GM12878 (cell line): ENCODE measurements at regions of chr1 and their contacts with region 1.

Region 1: GRCh38 chr1:181142096-181142958 is 53.8 kb downstream of the IER5 start:
- DNase-seq: no peak
- ATAC-seq: peak; percentile 92
- H3K4me3 ChIP-seq: no peak overlapping the region
- H3K27ac ChIP-seq: no peak overlapping the region
- H3K4me1 ChIP-seq: peaks cover 37% of the 10 kb centered on the region
- H3K27me3 ChIP-seq: no peaks in the 10 kb centered on the region
- CTCF ChIP-seq: peak; percentile 94 to 98 (median 98); a peak in 5 of 6 replicates
- EP300 ChIP-seq: no peak
- POLR2A ChIP-seq: no peak
- RAD21 ChIP-seq: peak; percentile 99

Region 2: DNA sequence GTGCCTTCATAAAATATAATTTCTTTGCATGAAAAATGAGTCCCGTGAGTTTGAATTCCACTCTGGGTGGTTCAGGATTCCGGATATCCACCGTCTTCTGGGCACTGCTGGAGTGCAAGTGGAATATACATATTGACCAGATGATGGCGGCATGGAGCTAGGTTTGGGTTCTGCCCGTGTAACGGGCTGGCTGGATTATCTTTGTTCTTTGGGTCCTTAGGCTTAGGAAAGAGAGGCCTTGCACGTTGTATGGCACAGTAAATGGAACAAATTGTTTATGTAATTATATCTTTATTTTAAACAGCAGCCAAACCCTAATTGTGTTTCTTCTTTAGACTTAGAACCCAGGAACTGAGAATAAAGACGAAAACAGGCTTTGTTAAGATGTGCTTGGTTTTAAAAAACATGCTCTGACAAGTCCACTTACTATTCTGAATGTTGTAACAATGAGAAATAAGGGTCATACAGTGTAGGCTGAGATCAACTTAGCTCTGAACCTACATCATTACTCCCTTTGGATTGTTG is 626.4 kb before region 1 on chr1:
- CTCF ChIA-PET with region 1: interaction called, 8 read pairs
- POLR2A ChIA-PET with region 1: no interaction called
- RAD21 ChIA-PET with region 1: interaction called, 12 read pairs
- SMC1A ChIA-PET with region 1: interaction called, 9 read pairs
- in situ Hi-C with region 1: no loop called
- intact Hi-C with region 1: no loop called
- DNase-seq: peak; percentile 49
- ATAC-seq: peak; percentile 99
- H3K4me3 ChIP-seq: no peak overlapping the region
- H3K27ac ChIP-seq: peak overlapping the region; percentile 40; the same call in 1 of the 2 replicates
- H3K4me1 ChIP-seq: peaks cover 3% of the 10 kb centered on the region; the same call in 1 of the 2 replicates
- H3K27me3 ChIP-seq: no peaks in the 10 kb centered on the region
- CTCF ChIP-seq: peak; percentile 72 to 88 (median 76)
- EP300 ChIP-seq: no peak
- POLR2A ChIP-seq: no peak
- RAD21 ChIP-seq: peak; percentile 92

Region 3: DNA sequence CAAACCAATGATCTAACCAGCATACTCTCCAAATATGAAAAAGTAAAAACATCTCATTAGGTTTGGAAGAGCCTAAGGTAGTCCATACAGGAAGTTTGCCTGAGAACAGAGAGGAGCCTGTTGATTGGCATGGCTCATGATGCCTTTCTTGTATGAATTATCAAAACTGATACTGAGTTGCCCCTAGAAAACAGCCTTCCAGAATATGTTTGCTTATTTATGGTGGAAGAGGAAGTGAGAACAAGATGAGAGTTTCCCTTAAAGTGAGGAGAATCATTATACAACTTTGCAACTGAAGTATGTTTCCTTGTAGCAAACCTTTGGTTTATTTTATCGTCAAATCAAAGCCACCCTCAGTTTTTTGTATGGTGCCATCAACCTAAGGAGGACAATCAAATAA is 253.5 kb before region 1 on chr1:
- CTCF ChIA-PET with region 1: interaction called, 151 read pairs
- POLR2A ChIA-PET with region 1: interaction called, 4 read pairs
- RAD21 ChIA-PET with region 1: interaction called, 151 read pairs
- SMC1A ChIA-PET with region 1: interaction called, 48 read pairs
- in situ Hi-C with region 1: loop called (anchors 5 kb)
- intact Hi-C with region 1: no loop called
- DNase-seq: peak; percentile 50
- ATAC-seq: peak; percentile 96
- H3K4me3 ChIP-seq: no peak overlapping the region
- H3K27ac ChIP-seq: peak overlapping the region; percentile 10; the same call in 1 of the 2 replicates
- H3K4me1 ChIP-seq: peaks cover 8% of the 10 kb centered on the region
- H3K27me3 ChIP-seq: no peaks in the 10 kb centered on the region
- CTCF ChIP-seq: no peak
- EP300 ChIP-seq: peak in 1 of 2 experiments; percentile 62; a peak in 1 of 4 replicates
- POLR2A ChIP-seq: no peak
- RAD21 ChIP-seq: no peak

Region 4: DNA sequence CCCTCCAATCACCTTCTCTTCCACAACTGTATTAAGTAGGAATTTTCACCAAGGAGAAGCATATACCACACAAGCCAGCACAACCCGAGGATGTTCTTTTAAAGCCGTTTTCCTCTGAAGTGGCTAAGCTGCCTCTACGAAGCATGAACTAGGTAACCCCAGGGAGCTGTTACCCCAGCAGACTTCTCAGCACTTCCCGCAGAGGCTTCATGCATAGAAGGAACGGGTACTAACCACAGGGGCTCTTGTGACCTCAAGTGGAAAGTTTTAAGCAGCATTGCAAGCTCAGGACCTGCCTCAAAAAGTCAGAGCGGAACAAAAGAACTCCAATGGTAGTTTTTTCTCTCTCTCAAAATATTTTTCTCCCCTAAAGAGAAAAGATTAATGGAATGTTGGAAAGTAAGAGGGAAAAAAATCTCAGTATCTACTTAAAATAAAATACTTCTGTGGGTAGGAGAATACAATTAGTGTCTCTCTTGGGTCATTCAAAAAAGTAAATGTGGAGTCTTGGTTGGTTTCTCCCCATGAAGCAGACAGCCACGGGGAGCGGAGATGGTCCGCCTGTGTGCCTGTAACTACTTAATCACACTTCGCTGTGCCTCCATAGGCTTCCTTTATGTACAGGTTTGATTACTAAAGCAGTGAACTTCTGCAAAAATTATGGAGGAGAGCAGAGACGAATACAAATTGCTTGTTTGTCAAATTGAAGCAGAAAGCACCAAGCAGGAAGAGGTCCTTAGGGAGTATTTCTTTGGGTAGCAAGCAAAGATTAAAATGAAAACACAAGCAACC is 160.5 kb before region 1 on chr1:
- CTCF ChIA-PET with region 1: interaction called, 11 read pairs
- POLR2A ChIA-PET with region 1: no interaction called
- RAD21 ChIA-PET with region 1: interaction called, 3 read pairs
- SMC1A ChIA-PET with region 1: interaction called, 13 read pairs
- in situ Hi-C with region 1: no loop called
- intact Hi-C with region 1: no loop called
- DNase-seq: peak; percentile 47
- ATAC-seq: peak; percentile 91
- H3K4me3 ChIP-seq: peak overlapping the region; percentile 19; the same call in 1 of the 2 replicates
- H3K27ac ChIP-seq: peak overlapping the region; percentile 65
- H3K4me1 ChIP-seq: peaks cover 8% of the 10 kb centered on the region; the same call in 1 of the 2 replicates
- H3K27me3 ChIP-seq: no peaks in the 10 kb centered on the region
- CTCF ChIP-seq: peak in 1 of 3 experiments; percentile 22; a peak in 1 of 6 replicates
- EP300 ChIP-seq: no peak
- POLR2A ChIP-seq: no peak
- RAD21 ChIP-seq: peak; percentile 32; the same call in 1 of the 2 replicates

Region 5: DNA sequence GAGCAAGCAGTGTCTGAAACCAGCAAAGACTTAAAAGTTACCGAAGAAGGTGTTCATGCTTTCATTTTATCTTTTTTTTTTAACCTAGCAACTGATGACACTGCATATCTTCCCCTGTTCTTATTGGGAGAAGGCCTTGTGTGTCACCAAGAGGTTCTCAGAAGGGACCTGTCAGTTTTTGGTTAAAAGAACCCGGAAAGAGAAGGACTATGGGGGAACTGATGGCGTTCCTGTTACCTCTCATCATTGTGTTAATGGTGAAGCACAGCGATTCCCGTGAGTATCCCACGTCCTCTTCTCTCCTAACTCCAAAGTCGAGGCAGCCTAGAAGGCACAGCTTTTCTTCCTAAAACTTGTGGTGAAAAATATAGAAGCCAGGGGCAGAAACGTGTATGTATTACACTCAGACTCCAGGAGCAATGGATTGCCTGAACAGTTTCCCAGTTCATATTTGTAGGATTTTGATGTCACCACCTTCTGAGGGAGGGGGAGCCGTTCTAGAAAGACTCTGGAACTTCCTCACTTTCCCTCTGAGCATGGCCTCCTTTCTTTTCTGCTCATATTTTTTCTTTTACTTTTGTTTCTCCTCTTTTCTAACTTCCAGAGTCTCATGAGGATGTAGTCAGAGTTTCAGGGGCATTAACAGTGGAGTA is 108.4 kb before region 1 on chr1 and contains the start of gene MR1:
- CTCF ChIA-PET with region 1: interaction called, 321 read pairs
- POLR2A ChIA-PET with region 1: interaction called, 13 read pairs
- RAD21 ChIA-PET with region 1: interaction called, 189 read pairs
- SMC1A ChIA-PET with region 1: interaction called, 276 read pairs
- in situ Hi-C with region 1: loop called (anchors 5 kb)
- intact Hi-C with region 1: loop called (anchors 1 kb)
- DNase-seq: peak; percentile 92
- ATAC-seq: peak; percentile 90
- H3K4me3 ChIP-seq: peak within 1 kb of the TSS; percentile 93
- H3K27ac ChIP-seq: peak within 1 kb of the TSS; percentile 89
- H3K4me1 ChIP-seq: peaks cover 23% of the 10 kb centered on the region
- H3K27me3 ChIP-seq: no peaks in the 10 kb centered on the region
- CTCF ChIP-seq: no peak
- EP300 ChIP-seq: no peak
- POLR2A ChIP-seq: peak; percentile 84
- RAD21 ChIP-seq: no peak
- polyA plus RNA-seq, gene MR1: 24.7 to 28.5 TPM

Region 6: GRCh38 chr1:181079382-181079781 is 62.9 kb before region 1 on chr1:
- CTCF ChIA-PET with region 1: interaction called, 1,067 read pairs
- POLR2A ChIA-PET with region 1: interaction called, 5 read pairs
- RAD21 ChIA-PET with region 1: interaction called, 966 read pairs
- SMC1A ChIA-PET with region 1: interaction called, 1,399 read pairs
- in situ Hi-C with region 1: no loop called
- intact Hi-C with region 1: loop called (anchors 1 kb)
- DNase-seq: no peak
- ATAC-seq: no peak
- H3K4me3 ChIP-seq: no peak overlapping the region
- H3K27ac ChIP-seq: no peak overlapping the region
- H3K4me1 ChIP-seq: peaks cover 38% of the 10 kb centered on the region
- H3K27me3 ChIP-seq: no peaks in the 10 kb centered on the region
- CTCF ChIP-seq: no peak
- EP300 ChIP-seq: no peak
- POLR2A ChIP-seq: no peak
- RAD21 ChIP-seq: no peak

Region 7: DNA sequence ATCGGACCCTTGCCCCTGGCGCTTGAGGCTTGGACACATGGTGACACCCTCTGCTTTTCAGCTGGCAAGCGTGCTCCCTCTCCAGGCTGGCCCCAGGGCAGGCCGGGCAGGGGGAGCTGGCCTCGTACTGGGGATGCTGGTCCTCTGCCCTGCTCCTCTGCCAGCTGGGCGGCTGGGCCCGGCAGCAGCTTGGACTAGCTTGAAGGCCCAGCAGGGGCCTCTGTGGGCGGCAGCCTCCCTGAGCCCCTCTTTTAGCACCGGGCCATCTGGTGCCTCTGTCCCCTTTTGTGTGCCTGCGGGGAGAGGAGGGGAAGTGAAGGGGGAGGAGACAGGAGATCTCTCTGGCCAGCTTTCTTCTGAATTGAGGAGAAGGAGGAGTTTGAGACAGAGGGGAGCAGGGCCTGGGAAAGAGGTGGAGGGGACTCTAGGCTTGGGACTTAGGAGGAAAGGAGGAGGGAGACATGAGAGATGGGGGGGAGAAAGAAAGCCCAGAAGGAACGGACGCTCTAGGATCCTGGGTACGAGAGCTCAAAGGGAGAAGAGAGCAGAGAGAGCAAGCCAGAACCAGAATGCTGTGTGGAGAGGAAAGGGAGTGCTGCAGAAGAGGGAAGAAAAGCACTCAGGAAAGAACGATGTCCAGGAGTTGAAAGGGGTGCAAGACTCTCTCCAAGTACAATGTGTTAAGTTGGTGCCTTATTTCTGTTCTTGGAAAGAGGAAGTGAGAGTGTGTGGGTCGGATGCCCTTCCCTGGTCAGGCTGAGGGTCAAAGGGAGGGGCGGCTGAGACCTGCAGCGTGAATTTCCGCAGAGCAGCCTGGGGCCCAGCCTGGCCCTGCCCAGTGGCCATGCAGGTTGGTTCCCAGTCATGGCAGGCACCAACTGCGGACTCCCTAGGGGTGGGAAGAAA is 13.5 kb before region 1 on chr1:
- CTCF ChIA-PET with region 1: interaction called, 44 read pairs
- POLR2A ChIA-PET with region 1: interaction called, 28 read pairs
- RAD21 ChIA-PET with region 1: interaction called, 45 read pairs
- SMC1A ChIA-PET with region 1: interaction called, 52 read pairs
- in situ Hi-C with region 1: no loop called
- intact Hi-C with region 1: no loop called
- DNase-seq: no peak
- ATAC-seq: peak; percentile 66
- H3K4me3 ChIP-seq: peak overlapping the region; percentile 63
- H3K27ac ChIP-seq: peak overlapping the region; percentile 92
- H3K4me1 ChIP-seq: peaks cover 79% of the 10 kb centered on the region
- H3K27me3 ChIP-seq: no peaks in the 10 kb centered on the region
- CTCF ChIP-seq: no peak
- EP300 ChIP-seq: peak in 1 of 2 experiments; percentile 89; a peak in 2 of 4 replicates
- POLR2A ChIP-seq: peak; percentile 57
- RAD21 ChIP-seq: no peak; the same call in 1 of the 2 replicates

Region 8: GRCh38 chr1:181335629-181336028 is 193.3 kb after region 1 on chr1:
- CTCF ChIA-PET with region 1: no interaction called
- POLR2A ChIA-PET with region 1: no interaction called
- RAD21 ChIA-PET with region 1: no interaction called
- SMC1A ChIA-PET with region 1: no interaction called
- in situ Hi-C with region 1: no loop called
- intact Hi-C with region 1: no loop called
- DNase-seq: no peak
- ATAC-seq: no peak
- H3K4me3 ChIP-seq: no peak overlapping the region
- H3K27ac ChIP-seq: no peak overlapping the region
- H3K4me1 ChIP-seq: no peaks in the 10 kb centered on the region
- H3K27me3 ChIP-seq: no peaks in the 10 kb centered on the region
- CTCF ChIP-seq: no peak
- EP300 ChIP-seq: no peak
- POLR2A ChIP-seq: no peak
- RAD21 ChIP-seq: no peak